ENCODE measurements at regions of chr7 and their contacts with region 1.

Region 1: GRCh38 chr7:74489997-74490945 is 36.6 kb downstream of the GTF2IRD1 start:
- DNase-seq: no peak
- ATAC-seq: no peak
- H3K4me3 ChIP-seq: no peak overlapping the region
- H3K27ac ChIP-seq: no peak overlapping the region
- H3K4me1 ChIP-seq: peaks cover 11 to 12% of the 10 kb centered on the region in 2 experiments
- H3K27me3 ChIP-seq: no peaks in the 10 kb centered on the region
- CTCF ChIP-seq: no peak
- POLR2A ChIP-seq: no peak
- RAD21 ChIP-seq: no peak

Region 2: DNA sequence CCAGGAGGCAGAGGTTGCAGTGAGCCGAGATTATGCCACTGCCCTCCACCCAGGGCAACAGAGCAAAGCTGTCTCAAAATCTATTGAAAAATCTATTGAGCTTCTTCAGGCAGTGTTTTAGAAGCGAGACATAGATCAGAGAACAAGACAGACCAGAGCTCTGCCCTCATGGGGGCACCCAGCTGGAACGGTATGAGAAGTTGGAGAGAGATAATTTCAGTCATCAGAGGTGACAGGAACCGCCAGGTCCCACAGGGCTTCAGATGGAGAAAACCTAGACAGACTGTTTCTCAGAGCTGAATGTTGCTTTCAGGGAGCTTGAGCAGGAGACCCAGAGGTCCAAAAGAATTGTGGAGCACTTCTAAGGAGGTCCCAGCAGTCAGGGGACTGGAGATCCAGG is 50.7 kb before region 1 on chr7:
- CTCF ChIA-PET with region 1: no interaction called
- POLR2A ChIA-PET with region 1: no interaction called
- RAD21 ChIA-PET with region 1: no interaction called
- intact Hi-C with region 1: loop called (anchors 5 kb)
- DNase-seq: no peak
- ATAC-seq: no peak
- H3K4me3 ChIP-seq: no peak overlapping the region
- H3K27ac ChIP-seq: no peak overlapping the region
- H3K4me1 ChIP-seq: peaks cover 0 to 10% of the 10 kb centered on the region in 2 experiments; a peak in 2 of 4 replicates
- H3K27me3 ChIP-seq: no peaks in the 10 kb centered on the region
- CTCF ChIP-seq: no peak
- POLR2A ChIP-seq: no peak
- RAD21 ChIP-seq: no peak